ENCODE measurements at regions of chr12 and their contacts with region 1.

Region 1: DNA sequence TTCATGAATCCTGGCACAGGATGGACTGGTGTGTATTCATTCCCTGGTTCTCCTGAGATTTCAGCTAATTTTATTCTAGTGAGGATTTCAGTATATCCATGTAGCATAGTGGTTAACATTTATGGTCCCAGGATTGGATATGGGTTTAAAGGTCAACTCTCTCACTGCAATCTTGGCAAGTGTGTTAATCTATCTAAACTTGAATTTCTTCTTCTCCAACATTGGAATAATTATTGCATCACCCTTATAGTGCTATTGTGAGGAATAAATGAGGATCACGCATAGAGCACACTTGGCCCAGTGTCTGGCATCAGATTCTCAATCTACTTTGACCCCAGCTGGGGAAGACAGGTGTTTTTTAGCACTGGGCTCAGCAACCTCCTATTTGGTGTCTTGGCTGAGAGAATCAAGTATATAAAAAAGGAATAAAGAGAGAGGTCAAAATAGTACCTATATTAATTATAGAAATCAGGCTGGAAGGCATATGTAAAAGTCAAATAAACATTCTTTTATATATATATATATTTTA is 531.2 kb upstream of the ATP2B1 start:
- DNase-seq: no peak
- H3K4me3 ChIP-seq: no peak overlapping the region
- CTCF ChIP-seq: no peak
- POLR2A ChIP-seq: no peak

Region 2: DNA sequence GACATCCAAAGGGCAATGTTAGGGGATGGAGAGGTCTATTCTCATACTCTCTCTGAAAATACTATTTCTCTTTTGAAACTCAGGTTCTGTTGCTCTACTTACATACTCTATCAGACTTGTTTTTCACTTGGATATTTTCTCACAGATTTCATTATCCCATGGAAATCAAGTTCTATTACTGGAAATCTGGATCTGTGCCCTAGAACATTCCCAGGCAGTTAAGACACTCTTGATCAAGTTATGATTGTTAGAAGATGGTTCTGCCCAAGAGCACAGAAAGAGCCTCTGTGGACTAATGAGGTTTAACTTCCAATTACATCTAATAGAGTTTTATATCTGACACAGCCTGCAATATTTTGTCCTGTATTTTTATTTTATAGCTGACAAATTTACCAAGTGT is 59.9 kb after region 1 on chr12:
- intact Hi-C with region 1: loop called (anchors 2 kb)
- DNase-seq: no peak
- H3K4me3 ChIP-seq: no peak overlapping the region
- CTCF ChIP-seq: no peak
- POLR2A ChIP-seq: no peak

Measured in lower leg skin (tissue), 4 donors.